ENCODE measurements at regions of chr19 and their contacts with region 1.

Region 1: GRCh38 chr19:34999498-35000341 is at the start of gene GRAMD1A:
- DNase-seq: peak; percentile 93
- H3K4me3 Mint-ChIP-seq: peak within 1 kb of the TSS; percentile 84
- H3K27ac Mint-ChIP-seq: peak within 1 kb of the TSS; percentile 86
- H3K4me1 Mint-ChIP-seq: peaks cover 29% of the 10 kb centered on the region
- H3K27me3 Mint-ChIP-seq: no peaks in the 10 kb centered on the region
- CTCF ChIP-seq: no peak
- total RNA-seq, gene GRAMD1A: 46.7 and 48.1 TPM in 2 replicates

Region 2: GRCh38 chr19:34957830-34958751 is 41.6 kb before region 1 on chr19:
- CTCF ChIA-PET with region 1: no interaction called
- POLR2A ChIA-PET with region 1: no interaction called
- intact Hi-C with region 1: no loop called
- DNase-seq: no peak
- H3K4me3 Mint-ChIP-seq: no peak overlapping the region
- H3K27ac Mint-ChIP-seq: no peak overlapping the region
- H3K4me1 Mint-ChIP-seq: peaks cover 14% of the 10 kb centered on the region
- H3K27me3 Mint-ChIP-seq: no peaks in the 10 kb centered on the region
- CTCF ChIP-seq: no peak

Region 3: DNA sequence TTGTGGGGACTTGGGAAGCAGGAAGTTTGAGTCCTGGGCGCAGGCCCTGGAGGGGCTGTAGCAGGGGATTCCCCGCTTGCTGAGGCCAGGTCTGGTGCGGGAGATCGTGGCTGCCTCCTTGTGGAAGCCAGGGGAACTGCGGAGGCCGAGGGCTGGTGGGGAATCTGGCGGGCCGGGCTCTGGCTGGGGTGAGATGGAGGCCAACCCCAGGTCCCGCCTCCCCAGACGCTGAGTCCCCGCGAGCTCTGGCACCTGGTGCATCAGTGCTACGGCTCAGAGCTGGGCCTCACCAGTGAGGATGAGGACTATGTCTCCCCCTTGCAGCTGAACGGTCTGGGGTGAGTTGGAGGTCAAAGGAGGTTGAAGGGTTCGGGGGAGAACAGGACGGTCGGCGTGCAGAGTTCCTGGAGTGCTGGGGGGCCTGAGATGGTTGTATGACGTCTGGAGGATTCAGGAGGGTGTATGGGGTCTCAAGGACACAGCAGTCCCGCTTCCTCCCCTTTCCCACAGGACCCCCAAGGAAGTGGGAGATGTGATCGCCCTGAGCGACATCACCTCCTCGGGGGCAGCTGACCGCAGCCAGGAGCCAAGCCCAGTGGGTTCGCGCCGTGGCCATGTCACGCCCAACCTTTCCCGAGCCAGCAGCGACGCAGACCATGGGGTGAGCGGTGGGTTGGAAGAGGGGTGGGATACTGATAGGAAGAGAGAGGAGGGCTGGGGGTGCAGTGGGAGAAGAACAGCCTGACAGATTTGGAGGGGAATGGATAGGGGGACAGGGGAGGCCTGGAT is 13.5 kb after region 1 on chr19:
- CTCF ChIA-PET with region 1: interaction called, 14 read pairs
- POLR2A ChIA-PET with region 1: interaction called, 9 read pairs
- intact Hi-C with region 1: no loop called
- DNase-seq: peak; percentile 44
- H3K4me3 Mint-ChIP-seq: no peak overlapping the region
- H3K27ac Mint-ChIP-seq: no peak overlapping the region
- H3K4me1 Mint-ChIP-seq: no peaks in the 10 kb centered on the region
- H3K27me3 Mint-ChIP-seq: no peaks in the 10 kb centered on the region
- CTCF ChIP-seq: peak; percentile 85

Measured in MCF 10A (cell line).